ENCODE measurements at regions of chr9 and their contacts with region 1.

Region 1: DNA sequence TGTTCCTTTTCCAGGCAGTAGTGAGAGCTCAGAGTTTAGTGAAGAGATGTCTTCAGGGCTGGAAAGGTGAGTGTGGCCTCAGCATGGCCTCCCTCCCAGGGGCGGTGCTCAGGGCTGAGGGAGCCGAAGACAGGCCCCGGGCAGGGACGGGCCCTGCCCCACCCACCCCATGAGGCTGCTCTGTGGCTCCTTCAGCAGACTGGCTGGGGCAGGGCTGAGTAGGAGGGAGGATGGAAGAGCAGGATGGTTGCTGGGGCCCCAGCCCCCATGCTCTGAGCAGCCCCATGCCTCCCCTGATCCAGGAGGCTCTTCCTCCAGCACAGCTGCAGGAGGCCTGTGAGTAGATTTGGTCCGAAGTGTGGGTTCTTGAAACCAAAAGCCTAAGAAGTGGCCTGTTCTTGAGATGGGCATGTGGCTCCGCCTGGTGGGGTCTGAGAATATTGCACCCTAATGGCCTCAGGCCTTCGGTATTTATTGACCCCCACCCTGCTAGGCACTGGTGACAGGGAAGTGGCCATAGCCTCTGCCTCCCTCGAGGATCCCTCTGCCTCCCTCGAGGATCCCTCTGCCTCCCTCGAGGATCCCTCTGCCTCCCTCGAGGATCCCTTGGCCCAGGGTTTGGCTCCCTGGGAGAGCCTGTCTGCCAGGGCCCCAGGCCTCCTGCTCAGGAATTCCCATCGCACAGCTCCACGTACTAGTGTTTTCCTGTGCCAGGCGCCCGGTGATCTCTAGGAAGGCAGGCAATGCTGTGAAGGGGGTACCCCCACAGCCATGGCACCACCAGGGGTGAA is 65.4 kb upstream of the GARNL3 start:
- DNase-seq: peak; percentile 35 to 88 (median 68)
- ATAC-seq: peak; percentile 74 to 91 (median 84)
- H3K4me3 ChIP-seq: no peak overlapping the region
- H3K27ac ChIP-seq: no peak overlapping the region
- H3K4me1 ChIP-seq: no peaks in the 10 kb centered on the region
- H3K27me3 ChIP-seq: no peaks in the 10 kb centered on the region
- CTCF ChIP-seq: peak; percentile 59 to 77 (median 66)

Region 2: GRCh38 chr9:126939821-126940221 is 259.4 kb before region 1 on chr9:
- intact Hi-C with region 1: loop called (anchors 5 to 10 kb)
- DNase-seq: peak in 4 of 6 donors; percentile 37 to 54 (median 51)
- ATAC-seq: peak; percentile 85 to 92 (median 91)
- H3K4me3 ChIP-seq: no peak overlapping the region
- H3K27ac ChIP-seq: peak overlapping the region in 2 of 4 donors; percentile 63 to 66
- H3K4me1 ChIP-seq: peaks cover 0 to 11% (median 0%) of the 10 kb centered on the region in 3 donors
- H3K27me3 ChIP-seq: no peaks in the 10 kb centered on the region
- CTCF ChIP-seq: no peak

Region 3: DNA sequence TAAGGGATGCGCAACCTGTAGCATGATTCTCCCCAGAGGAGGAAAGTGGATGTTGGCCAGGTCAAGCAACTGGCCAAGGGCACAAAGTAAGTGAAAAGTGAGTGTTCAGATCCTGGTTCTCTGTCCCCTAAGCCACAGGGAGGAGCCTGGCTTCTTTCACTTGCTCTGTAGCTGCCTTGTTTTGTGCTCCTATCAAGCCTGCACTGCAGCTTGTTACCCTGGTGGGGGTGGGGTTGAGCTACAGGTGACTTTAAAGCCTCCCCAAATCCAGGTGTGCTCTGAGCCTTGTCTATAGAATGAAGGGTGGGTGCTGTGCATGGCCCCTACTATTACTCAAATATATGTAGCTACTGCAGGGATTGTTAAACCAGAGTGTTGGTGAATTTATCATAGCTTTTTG is 251.7 kb before region 1 on chr9:
- intact Hi-C with region 1: loop called (anchors 5 to 10 kb)
- DNase-seq: no peak
- ATAC-seq: no peak
- H3K4me3 ChIP-seq: no peak overlapping the region
- H3K27ac ChIP-seq: no peak overlapping the region
- H3K4me1 ChIP-seq: no peaks in the 10 kb centered on the region
- H3K27me3 ChIP-seq: no peaks in the 10 kb centered on the region
- CTCF ChIP-seq: no peak

Region 4: GRCh38 chr9:127277099-127277498 is 77.9 kb after region 1 on chr9:
- intact Hi-C with region 1: no loop called
- DNase-seq: no peak
- ATAC-seq: peak in 1 of 4 donors; percentile 23
- H3K4me3 ChIP-seq: no peak overlapping the region
- H3K27ac ChIP-seq: peak overlapping the region in 1 of 4 donors; percentile 27
- H3K4me1 ChIP-seq: peaks cover 0 to 9% (median 0%) of the 10 kb centered on the region in 3 donors
- H3K27me3 ChIP-seq: no peaks in the 10 kb centered on the region
- CTCF ChIP-seq: no peak

Region 5: GRCh38 chr9:127546125-127546832 is 347.1 kb after region 1 on chr9:
- intact Hi-C with region 1: no loop called
- DNase-seq: peak in 2 of 6 donors; percentile 50 to 70
- ATAC-seq: peak in 2 of 4 donors; percentile 1
- H3K4me3 ChIP-seq: peak overlapping the region in 1 of 4 donors; percentile 6
- H3K27ac ChIP-seq: peak overlapping the region; percentile 89 to 95 (median 94)
- H3K4me1 ChIP-seq: peaks cover 72 to 86% (median 76%) of the 10 kb centered on the region in 3 donors
- H3K27me3 ChIP-seq: no peaks in the 10 kb centered on the region
- CTCF ChIP-seq: no peak

Measured in pancreas (tissue), 10 donors.